ENCODE measurements at regions of chr6 and their contacts with region 1.

Region 1: DNA sequence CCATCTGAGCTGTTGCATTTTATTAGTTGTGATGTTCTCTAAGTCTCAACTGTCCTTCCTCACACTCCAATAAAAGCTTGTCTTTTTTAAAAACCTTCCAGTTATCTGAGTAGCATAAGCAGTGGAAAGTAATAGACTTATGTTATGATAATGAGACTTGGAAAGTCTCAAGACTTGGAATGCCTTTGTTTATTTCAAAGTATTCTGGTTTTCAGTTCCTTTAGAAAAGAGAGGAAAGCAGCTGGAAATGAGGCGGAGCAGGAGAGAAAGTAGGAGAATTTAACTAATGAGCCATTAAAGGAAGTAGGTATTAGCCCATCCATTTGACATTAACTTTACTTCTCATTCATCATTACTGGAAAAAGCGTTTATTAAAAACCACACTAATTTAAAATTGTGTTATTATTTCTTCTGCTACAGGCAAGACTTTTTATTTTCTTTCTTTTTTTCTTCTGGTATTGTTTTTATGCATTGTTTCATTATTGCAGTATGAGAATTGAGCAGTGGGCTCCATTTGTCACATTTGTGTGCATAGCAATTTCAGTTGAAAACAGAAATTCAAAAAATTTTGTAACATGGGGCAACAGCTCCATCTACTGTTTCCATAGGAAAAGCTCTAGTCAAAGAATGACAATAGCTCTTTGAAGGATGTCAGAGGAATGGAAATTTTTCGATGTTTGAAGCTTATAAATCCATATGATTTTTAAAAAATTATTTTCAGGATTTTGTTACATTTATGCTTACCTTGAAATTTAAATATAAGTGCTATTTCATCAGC is 194.8 kb downstream of the COL9A1 start:
- DNase-seq: peak; percentile 10
- ATAC-seq: no peak; the same call in 1 of the 2 replicates
- H3K4me3 ChIP-seq: no peak overlapping the region
- H3K27ac ChIP-seq: no peak overlapping the region
- H3K4me1 ChIP-seq: no peaks in the 10 kb centered on the region
- H3K27me3 ChIP-seq: peaks cover 22% of the 10 kb centered on the region
- CTCF ChIP-seq: peak; percentile 32 to 74 (median 60); a peak in 5 of 6 replicates
- POLR2A ChIP-seq: no peak
- RAD21 ChIP-seq: peak; percentile 63

Region 2: GRCh38 chr6:68634726-68635411 is 1473.2 kb before region 1 on chr6 and contains the start of gene ADGRB3:
- CTCF ChIA-PET with region 1: no interaction called
- POLR2A ChIA-PET with region 1: no interaction called
- RAD21 ChIA-PET with region 1: no interaction called
- intact Hi-C with region 1: loop called (anchors 5 kb)
- DNase-seq: no peak
- ATAC-seq: no peak
- H3K4me3 ChIP-seq: no peak within 1 kb of the TSS
- H3K27ac ChIP-seq: no peak within 1 kb of the TSS
- H3K4me1 ChIP-seq: no peaks in the 10 kb centered on the region
- H3K27me3 ChIP-seq: no peaks in the 10 kb centered on the region
- CTCF ChIP-seq: no peak
- POLR2A ChIP-seq: no peak
- RAD21 ChIP-seq: no peak
- total RNA-seq, gene ADGRB3: not detected

Region 3: DNA sequence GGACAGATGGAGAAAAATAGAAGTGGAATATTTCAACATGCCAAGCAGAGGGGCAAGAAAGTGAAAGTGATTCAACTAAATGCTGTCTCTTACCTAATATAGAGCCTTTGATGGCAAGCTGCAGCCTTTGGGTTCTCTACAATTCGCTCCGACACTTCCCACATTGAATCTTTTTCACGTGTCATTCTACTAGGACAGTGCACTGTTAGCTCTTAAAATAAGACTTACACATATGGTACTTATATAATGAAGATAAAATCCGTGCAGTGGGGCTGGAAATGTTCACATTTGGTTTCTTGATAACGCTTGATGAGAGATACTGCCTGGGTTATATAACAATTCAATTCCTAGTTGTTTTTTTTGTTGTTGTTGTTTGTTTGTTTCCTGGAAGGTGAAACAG is 813.6 kb before region 1 on chr6:
- CTCF ChIA-PET with region 1: no interaction called
- POLR2A ChIA-PET with region 1: no interaction called
- RAD21 ChIA-PET with region 1: no interaction called
- intact Hi-C with region 1: no loop called
- DNase-seq: no peak
- ATAC-seq: no peak
- H3K4me3 ChIP-seq: no peak overlapping the region
- H3K27ac ChIP-seq: no peak overlapping the region
- H3K4me1 ChIP-seq: no peaks in the 10 kb centered on the region
- H3K27me3 ChIP-seq: no peaks in the 10 kb centered on the region
- CTCF ChIP-seq: no peak
- POLR2A ChIP-seq: no peak
- RAD21 ChIP-seq: no peak

Region 4: DNA sequence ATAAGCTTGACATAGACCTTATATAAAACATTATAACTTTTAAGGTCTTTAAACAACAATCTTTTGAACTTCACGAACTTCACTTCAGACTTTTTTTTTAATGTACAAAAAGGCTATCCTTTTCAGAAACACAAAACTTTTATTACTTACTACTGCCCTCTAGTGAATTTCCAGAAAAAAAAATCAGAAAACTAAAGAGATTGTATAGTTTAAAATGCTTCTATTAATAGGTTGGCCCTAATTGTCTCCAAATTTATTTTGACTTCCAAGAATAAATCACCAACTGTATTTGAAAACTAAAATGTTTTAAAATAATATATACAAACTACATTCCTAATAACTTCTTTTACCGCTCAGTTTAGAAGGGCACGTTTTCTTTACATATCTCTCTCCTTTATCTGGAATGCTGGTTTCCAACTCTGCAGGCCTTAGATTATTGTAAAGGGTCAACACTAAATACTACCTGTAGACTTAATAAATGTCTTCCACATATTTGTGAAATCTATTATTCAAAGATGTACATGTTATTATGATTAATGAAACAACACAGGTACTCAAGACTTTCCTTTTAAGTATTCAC is 378.1 kb before region 1 on chr6:
- CTCF ChIA-PET with region 1: interaction called, 23 read pairs
- POLR2A ChIA-PET with region 1: no interaction called
- RAD21 ChIA-PET with region 1: no interaction called
- intact Hi-C with region 1: loop called (anchors 5 kb)
- DNase-seq: no peak
- ATAC-seq: no peak
- H3K4me3 ChIP-seq: no peak overlapping the region
- H3K27ac ChIP-seq: no peak overlapping the region
- H3K4me1 ChIP-seq: no peaks in the 10 kb centered on the region
- H3K27me3 ChIP-seq: no peaks in the 10 kb centered on the region
- CTCF ChIP-seq: peak in 2 of 3 experiments; percentile 14 to 56; a peak in 2 of 6 replicates
- POLR2A ChIP-seq: no peak
- RAD21 ChIP-seq: 0 out of 2 replicates have a peak, but pooled peaks have one; percentile 12

Region 5: DNA sequence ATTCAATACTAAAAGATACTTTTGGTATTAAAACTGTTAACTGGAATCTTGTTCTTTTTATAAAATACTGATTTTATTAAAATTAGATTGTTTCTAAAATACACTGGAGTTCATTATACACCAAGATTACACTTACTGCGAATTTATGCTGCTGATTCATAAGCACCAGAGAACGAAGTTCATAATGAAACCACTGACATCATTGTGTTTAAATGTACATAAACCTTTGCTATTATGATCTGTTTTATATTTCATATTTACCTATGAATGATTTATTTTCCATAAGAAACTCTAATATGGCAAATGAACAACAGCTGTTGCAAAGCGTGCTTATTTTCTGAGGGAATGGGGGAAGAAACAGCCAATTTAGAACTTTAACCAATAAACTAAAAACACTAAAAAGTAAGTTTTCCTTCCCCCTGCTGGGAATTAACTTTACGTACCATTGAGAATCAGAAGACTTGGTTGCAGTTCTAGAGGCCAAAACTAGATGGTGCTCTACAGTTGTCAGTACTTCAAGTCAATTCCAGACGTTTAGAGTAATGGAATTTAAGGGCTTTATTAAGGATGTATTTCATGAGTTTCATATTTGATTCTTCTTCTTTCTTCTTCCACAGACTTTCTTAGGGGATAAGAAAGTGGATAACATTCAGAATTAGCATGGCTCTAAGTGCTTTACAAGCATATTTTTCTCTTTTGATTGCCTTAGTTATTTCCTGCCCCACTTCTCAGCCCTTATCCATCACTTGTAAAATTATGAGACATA is 272.4 kb before region 1 on chr6:
- CTCF ChIA-PET with region 1: interaction called, 5 read pairs
- POLR2A ChIA-PET with region 1: no interaction called
- RAD21 ChIA-PET with region 1: no interaction called
- intact Hi-C with region 1: loop called (anchors 5 kb)
- DNase-seq: peak; percentile 56
- ATAC-seq: peak; percentile 81
- H3K4me3 ChIP-seq: no peak overlapping the region
- H3K27ac ChIP-seq: no peak overlapping the region
- H3K4me1 ChIP-seq: no peaks in the 10 kb centered on the region
- H3K27me3 ChIP-seq: 0 out of 2 replicates have a peak, but pooled peaks cover 3% of the 10 kb centered on the region
- CTCF ChIP-seq: peak; percentile 30 to 80 (median 75); a peak in 5 of 6 replicates
- POLR2A ChIP-seq: no peak
- RAD21 ChIP-seq: peak; percentile 49

Region 6: GRCh38 chr6:69866770-69867638 is 241.0 kb before region 1 on chr6:
- CTCF ChIA-PET with region 1: no interaction called
- POLR2A ChIA-PET with region 1: no interaction called
- RAD21 ChIA-PET with region 1: no interaction called
- intact Hi-C with region 1: no loop called
- DNase-seq: no peak
- ATAC-seq: no peak
- H3K4me3 ChIP-seq: no peak overlapping the region
- H3K27ac ChIP-seq: no peak overlapping the region
- H3K4me1 ChIP-seq: no peaks in the 10 kb centered on the region
- H3K27me3 ChIP-seq: peaks cover 8% of the 10 kb centered on the region; the same call in 1 of the 2 replicates
- CTCF ChIP-seq: no peak
- POLR2A ChIP-seq: no peak
- RAD21 ChIP-seq: no peak

Region 7: DNA sequence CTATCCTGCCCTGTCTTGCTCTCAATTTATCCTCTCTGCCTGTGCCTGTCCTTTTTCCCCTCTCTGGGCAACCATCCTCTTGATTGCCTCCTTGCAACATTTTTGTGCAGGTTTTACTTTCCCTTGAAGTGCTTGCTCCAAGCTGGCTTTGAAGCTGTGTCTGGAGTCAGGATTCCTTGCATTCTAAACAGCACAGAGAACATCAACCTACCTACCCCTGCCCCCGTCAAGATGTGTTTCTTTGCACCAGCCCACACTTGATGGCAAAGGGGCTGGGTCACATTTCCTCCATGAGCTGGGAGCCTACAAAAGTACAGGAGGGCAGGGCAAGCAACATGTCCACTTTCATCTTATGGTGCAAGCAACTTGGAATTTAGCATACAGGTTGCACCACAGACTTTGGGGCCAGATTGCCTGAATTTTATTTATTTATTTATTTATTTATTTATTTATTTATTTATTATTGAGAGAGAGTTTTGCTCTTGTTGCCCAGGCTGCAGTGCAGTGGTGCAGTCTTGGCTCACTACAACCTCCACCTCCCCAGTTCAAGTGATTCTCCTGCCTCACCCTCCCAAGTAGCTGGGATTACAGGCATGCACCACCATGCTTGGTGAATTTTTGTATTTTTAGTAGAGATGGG is 35.4 kb before region 1 on chr6:
- CTCF ChIA-PET with region 1: no interaction called
- POLR2A ChIA-PET with region 1: no interaction called
- RAD21 ChIA-PET with region 1: no interaction called
- intact Hi-C with region 1: no loop called
- DNase-seq: no peak
- ATAC-seq: no peak
- H3K4me3 ChIP-seq: no peak overlapping the region
- H3K27ac ChIP-seq: no peak overlapping the region
- H3K4me1 ChIP-seq: no peaks in the 10 kb centered on the region
- H3K27me3 ChIP-seq: peaks cover 12% of the 10 kb centered on the region; the same call in 1 of the 2 replicates
- CTCF ChIP-seq: no peak
- POLR2A ChIP-seq: no peak
- RAD21 ChIP-seq: no peak

Region 8: DNA sequence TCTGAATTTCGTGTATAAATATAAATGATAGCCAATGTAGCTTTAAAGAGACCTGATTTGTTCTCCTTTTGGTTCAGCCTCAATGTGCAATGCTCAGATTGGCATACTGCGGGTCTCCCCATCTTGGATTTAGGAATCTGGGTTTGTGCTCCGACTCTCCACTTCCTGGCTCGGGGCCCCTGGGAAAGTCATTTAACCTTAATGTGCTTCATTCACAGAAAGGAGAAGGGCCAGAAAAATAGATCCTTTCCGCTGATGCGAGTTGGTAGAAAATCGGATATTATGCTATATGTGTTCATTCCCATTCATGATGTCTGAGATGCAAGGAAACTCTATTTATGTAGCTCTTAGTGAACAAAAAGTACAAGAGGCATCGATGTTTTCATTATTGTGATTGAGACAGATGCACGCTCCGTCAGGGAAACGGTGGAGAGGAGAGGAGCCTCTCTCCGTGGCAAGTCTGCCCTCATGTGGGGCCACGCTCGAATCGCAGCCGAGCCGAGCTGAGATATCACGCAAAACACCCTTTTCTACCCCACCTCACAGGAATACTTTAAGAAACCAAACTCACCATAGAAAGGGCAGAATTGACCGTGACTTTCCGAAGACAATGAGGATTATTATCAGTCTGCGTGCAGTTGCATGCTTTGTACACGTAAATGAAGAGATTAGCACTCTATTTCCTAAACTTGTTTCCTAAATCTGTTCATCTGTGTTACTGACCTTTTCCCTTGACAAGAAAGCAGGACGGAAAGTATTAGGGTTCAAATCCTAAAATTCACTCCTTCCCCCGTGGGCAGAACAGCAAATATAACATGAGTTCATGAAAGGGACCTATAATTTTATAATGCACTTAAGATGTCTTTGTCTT is 58.3 kb after region 1 on chr6:
- CTCF ChIA-PET with region 1: no interaction called
- POLR2A ChIA-PET with region 1: no interaction called
- RAD21 ChIA-PET with region 1: no interaction called
- intact Hi-C with region 1: loop called (anchors 2 kb)
- DNase-seq: peak; percentile 16
- ATAC-seq: peak; percentile 98
- H3K4me3 ChIP-seq: no peak overlapping the region
- H3K27ac ChIP-seq: no peak overlapping the region
- H3K4me1 ChIP-seq: no peaks in the 10 kb centered on the region
- H3K27me3 ChIP-seq: peaks cover 27% of the 10 kb centered on the region
- CTCF ChIP-seq: peak; percentile 26 to 75 (median 71); a peak in 5 of 6 replicates
- POLR2A ChIP-seq: no peak
- RAD21 ChIP-seq: peak; percentile 65

Measured in HCT116 (cell line).